ENCODE measurements at regions of chr9 and their contacts with region 1.

Region 1: DNA sequence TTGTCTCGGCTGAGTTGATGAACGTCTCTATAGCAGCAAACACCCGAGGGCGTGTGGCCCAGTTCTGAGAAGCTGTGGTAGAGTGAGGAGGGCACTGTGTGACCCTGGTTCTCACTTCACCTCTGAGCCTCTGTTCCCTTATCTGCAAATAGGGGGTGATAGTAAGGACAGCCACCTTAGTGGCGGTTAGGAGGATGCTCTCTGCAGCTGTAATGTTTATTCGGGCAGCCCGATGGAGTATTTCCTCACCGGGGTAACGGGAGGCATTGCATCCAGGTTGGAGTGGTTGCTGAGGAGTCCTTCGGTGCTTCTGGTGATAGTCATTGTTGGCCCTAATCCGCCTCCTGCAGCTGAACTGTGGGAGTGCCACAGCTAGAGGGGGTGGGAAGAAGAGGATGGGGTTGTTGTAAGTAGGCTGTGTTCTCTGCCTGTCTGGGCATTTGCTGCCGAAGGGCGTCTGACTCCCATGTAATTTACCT is 13.9 kb downstream of the PRRC2B start:
- DNase-seq: no peak
- H3K4me3 ChIP-seq: no peak overlapping the region
- H3K4me3 Mint-ChIP-seq: no peak overlapping the region
- H3K27ac Mint-ChIP-seq: peak overlapping the region; percentile 54
- H3K4me1 ChIP-seq: peaks cover 37% of the 10 kb centered on the region
- H3K4me1 Mint-ChIP-seq: peaks cover 59% of the 10 kb centered on the region
- H3K27me3 ChIP-seq: no peaks in the 10 kb centered on the region
- H3K27me3 Mint-ChIP-seq: no peaks in the 10 kb centered on the region
- CTCF ChIP-seq: no peak

Region 2: DNA sequence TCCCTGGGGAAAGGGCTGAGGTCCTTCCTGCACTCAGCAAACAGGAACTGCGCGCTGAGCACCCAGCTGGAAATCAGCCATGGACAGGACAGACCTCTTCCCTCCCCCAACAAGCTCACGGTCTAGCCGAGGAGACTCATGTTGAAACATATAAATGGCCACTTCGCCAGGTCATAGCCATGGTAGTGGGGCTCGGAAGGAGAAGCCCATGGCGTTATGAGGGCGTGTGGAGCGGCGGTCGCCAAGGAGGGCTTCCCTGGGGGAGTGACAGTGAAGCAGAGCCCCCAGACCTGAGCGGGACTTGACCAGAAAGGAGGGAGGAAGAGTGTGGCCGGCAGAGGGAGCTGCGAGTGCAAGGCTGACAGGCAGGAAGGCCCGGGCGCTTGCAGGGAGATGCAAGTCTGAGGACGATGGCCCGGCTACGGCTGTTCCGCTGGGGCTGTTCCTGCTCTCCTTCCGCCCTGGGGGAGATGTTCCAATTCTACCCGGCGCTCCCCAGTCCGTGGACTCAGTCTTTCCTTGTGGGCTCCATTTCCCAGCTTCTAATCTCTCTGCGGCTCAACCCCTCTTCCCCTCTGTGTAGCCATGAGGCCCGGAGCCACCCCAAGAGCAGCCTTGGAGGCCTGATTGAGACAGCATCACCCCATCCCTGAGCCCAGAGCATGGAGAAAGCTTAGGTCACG is 57.7 kb before region 1 on chr9:
- CTCF ChIA-PET with region 1: interaction called, 5 read pairs
- POLR2A ChIA-PET with region 1: no interaction called
- intact Hi-C with region 1: loop called (anchors 10 kb)
- DNase-seq: peak; percentile 86 to 88
- H3K4me3 ChIP-seq: no peak overlapping the region
- H3K4me3 Mint-ChIP-seq: peak overlapping the region; percentile 60
- H3K27ac Mint-ChIP-seq: no peak overlapping the region
- H3K4me1 ChIP-seq: peaks cover 9% of the 10 kb centered on the region
- H3K4me1 Mint-ChIP-seq: no peaks in the 10 kb centered on the region
- H3K27me3 ChIP-seq: no peaks in the 10 kb centered on the region
- H3K27me3 Mint-ChIP-seq: no peaks in the 10 kb centered on the region
- CTCF ChIP-seq: peak; percentile 68 to 86